ENCODE measurements at regions of chr10 and their contacts with region 1.

Region 1: DNA sequence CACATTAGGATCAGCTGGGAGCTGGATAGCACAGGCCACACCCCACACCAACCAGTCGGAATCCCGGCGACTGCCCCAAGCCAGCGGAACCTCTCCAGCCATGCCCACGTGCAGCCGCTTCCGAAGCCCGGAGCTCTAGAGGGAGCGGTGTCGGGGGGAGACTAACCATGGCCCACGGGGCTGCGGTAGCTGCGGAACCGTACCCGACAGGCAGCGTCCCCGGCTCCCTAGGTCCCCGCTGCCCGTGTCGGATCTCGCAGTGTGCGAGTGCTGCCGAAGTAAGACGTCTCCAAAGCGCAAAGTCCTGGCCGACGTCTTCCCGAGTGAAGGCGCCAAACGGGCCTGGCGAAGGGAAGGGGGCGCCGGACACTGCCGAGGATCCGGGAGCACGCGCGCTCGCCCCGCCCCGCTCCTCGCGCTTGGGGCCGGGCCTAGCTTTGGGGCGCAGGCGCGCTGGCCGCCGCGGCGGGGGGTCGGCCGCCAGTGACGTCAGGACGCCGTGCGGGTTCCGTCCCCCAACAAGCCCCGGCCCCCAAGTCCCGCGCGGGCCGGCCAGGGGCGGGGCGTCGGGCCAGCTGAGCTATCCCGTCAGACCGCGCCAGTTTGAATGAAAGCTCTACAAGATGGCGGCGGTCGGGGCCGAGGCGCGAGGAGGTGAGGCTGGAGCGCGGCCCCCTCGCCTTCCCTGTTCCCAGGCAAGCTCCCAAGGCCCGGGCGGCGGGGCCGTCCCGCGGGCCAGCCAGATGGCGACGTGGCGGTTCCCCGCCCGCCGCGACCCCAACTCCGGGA is at the start of gene SUV39H2:
- DNase-seq: peak; percentile 96 to 98 (median 97)
- ATAC-seq: peak; percentile 89 to 98 (median 95)
- H3K4me3 ChIP-seq: peak within 1 kb of the TSS; percentile 74 to 97 (median 90)
- H3K27ac ChIP-seq: peak within 1 kb of the TSS; percentile 82 to 99 (median 97)
- H3K4me1 ChIP-seq: peaks cover 0 to 36% (median 22%) of the 10 kb centered on the region in 12 donors
- H3K27me3 ChIP-seq: no peaks in the 10 kb centered on the region
- CTCF ChIP-seq: peak in 5 of 12 donors; percentile 13 to 37 (median 29)
- POLR2A ChIP-seq: peak in 1 of 2 donors; percentile 72
- total RNA-seq, gene SUV39H2: 1.3 to 8.4 (median 5.5) TPM

Region 2: DNA sequence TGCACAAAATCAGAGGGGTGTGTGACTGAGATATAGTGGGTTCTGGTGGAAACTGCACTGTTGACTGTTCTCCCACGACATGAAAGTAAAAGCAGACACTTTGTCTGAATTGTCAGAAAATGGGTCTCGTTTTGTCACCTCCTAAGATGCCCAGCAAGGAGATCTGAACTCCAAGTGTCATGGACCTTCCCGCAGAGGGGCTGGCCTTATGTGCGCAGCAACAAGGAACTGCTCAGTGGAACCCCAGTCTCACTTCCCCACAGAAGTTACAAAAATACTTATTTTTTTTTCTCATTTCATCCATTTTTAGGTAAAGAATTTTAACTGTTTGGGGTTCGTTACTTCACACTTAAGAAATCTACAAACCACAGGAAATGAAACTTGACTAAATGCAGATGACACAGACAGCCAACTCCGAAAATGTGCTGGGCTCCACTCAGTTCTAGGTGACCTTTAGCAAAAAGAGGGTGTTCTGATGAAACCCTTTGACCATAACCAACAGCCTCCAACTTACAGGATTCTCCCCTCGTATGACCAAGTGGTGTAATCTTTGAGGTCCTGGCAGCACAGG is 218.7 kb before region 1 on chr10:
- intact Hi-C with region 1: no loop called
- DNase-seq: peak in 2 of 5 donors; percentile 12 to 60
- ATAC-seq: peak in 3 of 4 donors; percentile 39 to 72 (median 51)
- H3K4me3 ChIP-seq: no peak overlapping the region
- H3K27ac ChIP-seq: peak overlapping the region in 1 of 12 donors; percentile 60
- H3K4me1 ChIP-seq: peaks cover 0 to 56% (median 0%) of the 10 kb centered on the region in 12 donors
- H3K27me3 ChIP-seq: no peaks in the 10 kb centered on the region
- CTCF ChIP-seq: no peak
- POLR2A ChIP-seq: no peak

Region 3: DNA sequence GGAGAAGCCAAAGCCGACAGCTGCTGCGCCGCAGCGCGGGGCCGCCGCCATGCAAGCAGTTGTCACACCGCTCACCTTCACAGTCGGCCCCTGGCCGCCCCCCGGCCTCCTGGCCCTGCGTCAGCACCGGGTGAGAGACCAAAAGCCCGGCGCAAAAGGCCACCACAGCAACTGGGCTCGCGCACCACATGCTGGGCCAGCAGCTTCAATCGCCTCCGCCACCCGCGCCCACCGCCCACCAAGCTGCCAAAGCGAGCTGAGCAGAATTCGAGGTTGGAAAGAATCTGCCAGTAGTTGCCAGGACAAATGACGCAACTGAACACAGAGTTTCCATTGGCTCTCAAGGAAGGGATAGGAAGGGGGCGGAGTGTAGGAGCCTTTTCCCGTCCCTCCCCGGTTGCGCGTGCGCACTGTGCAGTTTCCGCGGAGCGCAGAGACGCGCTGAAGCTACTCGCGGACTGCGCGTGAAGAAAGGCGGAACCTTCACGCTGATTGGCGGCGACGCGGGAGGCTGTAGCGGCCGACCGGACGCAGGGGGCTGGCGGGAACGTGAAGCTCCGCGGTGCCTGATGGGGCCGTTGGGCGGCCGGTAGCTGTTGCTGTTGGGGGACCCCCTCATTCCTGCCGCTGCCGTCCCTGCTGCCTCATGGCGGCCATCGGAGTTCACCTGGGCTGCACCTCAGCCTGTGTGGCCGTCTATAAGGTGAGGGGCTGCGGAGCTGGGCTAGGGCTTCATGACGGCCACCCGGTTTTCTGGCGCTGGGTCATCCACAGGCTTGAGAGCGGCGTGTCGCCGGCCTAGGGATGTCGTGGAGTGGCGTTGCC is 40.5 kb before region 1 on chr10 and contains the starts of genes CDNF, HSPA14 and MSANTD7:
- intact Hi-C with region 1: loop called in 8 of 10 experiments (anchors 1 to 5 kb)
- DNase-seq: peak; percentile 99 to 100 (median 100)
- ATAC-seq: peak; percentile 99
- H3K4me3 ChIP-seq: peak within 1 kb of the TSS; percentile 73 to 99 (median 94)
- H3K27ac ChIP-seq: peak within 1 kb of the TSS; percentile 94 to 99 (median 97)
- H3K4me1 ChIP-seq: peaks cover 5 to 26% (median 17%) of the 10 kb centered on the region in 12 donors
- H3K27me3 ChIP-seq: no peaks in the 10 kb centered on the region
- CTCF ChIP-seq: peak in 1 of 12 donors; percentile 12
- POLR2A ChIP-seq: peak; percentile 28 to 87
- total RNA-seq, gene CDNF: 1.7 to 5.4 (median 4.1) TPM
- total RNA-seq, gene HSPA14: 6.2 to 11.1 (median 8.3) TPM
- total RNA-seq, gene MSANTD7: 4.5 to 8.1 (median 5.6) TPM

Region 4: DNA sequence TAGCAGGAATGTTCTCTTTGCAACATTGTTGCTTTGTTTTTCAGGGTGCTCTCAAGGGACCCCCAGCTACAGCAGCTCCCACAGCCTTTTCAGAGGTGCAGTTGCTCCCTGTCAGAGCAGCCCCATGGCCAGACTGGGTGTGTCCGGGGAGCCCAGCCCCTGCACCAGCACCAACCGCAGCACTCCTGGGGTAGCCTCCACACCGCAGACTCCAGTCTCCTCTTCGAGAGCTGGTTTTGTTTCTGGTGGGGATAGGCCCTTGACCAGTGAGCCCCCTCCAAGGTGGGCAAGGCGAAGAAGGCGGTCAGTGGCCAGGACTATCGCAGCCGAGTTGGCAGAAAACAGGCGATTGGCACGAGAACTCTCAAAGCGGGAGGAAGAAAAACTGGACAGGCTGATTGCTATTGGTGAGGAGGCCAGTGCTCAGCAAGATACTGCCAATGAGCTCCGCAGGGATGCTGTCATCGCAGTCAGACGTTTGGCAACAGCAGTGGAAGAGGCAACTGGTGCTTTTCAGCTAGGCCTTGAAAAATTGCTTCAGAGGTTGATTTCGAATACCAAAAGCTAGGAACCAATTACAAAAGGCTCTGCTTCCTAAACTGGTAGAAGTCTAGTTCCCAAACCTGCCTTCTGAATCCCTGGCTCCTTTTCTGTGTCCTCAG is 35.0 kb before region 1 on chr10:
- intact Hi-C with region 1: loop called in 8 of 10 experiments (anchors 1 to 5 kb)
- DNase-seq: no peak
- ATAC-seq: no peak
- H3K4me3 ChIP-seq: no peak overlapping the region
- H3K27ac ChIP-seq: no peak overlapping the region
- H3K4me1 ChIP-seq: peaks cover 0 to 14% (median 9%) of the 10 kb centered on the region in 12 donors
- H3K27me3 ChIP-seq: no peaks in the 10 kb centered on the region
- CTCF ChIP-seq: no peak
- POLR2A ChIP-seq: no peak

Region 5: GRCh38 chr10:14954001-14954770 is 75.7 kb after region 1 on chr10 and contains the start of gene DCLRE1C:
- intact Hi-C with region 1: loop called in 5 of 10 experiments (anchors 1 to 5 kb)
- DNase-seq: peak; percentile 90 to 94 (median 92)
- ATAC-seq: peak; percentile 96 to 99 (median 98)
- H3K4me3 ChIP-seq: peak within 1 kb of the TSS; percentile 69 to 95 (median 80)
- H3K27ac ChIP-seq: peak within 1 kb of the TSS; percentile 33 to 91 (median 85)
- H3K4me1 ChIP-seq: peaks cover 0 to 37% (median 18%) of the 10 kb centered on the region in 12 donors
- H3K27me3 ChIP-seq: no peaks in the 10 kb centered on the region
- CTCF ChIP-seq: peak in 1 of 12 donors; percentile 6
- POLR2A ChIP-seq: peak in 1 of 2 donors; percentile 40
- total RNA-seq, gene DCLRE1C: 2.5 to 9.6 (median 5.3) TPM

Region 6: DNA sequence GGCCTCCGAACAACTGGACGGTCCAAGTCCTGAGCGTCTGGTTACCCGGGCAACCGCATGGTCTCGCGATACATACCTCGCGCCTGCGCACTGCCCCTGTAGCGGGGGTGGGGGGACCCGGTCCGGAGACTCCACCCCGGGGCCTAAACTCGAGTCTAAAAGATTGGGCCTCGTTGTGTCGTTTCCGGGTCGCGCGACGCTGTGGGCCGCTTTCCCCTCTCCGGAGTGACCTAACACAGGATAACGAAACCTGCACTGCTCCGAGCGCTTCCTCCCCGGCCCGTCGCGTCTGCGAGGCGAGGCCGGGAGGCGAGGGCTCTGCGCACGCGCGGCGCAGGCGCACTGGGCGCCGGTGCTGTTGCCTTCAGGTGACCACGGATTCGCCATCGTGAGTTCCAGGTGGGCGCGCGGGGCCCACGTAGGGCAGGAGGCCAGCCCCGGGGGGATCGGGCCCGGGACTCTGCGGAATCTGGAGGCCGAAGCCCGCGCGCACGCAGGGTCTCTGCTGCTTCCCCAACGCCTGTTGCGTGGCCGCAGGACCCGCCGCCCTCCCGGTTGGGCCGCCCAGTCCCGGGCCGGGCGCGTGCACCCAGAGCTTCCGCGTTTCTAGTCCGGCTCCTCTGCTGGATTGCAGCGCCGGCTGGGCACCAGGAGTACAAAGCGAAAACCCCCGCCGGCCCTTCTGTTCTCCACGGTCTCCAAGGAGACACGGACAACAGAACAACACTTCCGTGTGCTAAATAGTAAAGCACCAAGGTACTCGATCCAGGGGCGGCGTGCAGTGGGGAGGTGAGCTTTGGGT is 218.8 kb after region 1 on chr10 and contains the start of gene RPP38:
- intact Hi-C with region 1: loop called in 1 of 10 experiments (anchors 10 kb)
- DNase-seq: peak; percentile 95 to 99 (median 97)
- ATAC-seq: peak; percentile 97 to 99 (median 98)
- H3K4me3 ChIP-seq: peak within 1 kb of the TSS; percentile 63 to 97 (median 88)
- H3K27ac ChIP-seq: peak within 1 kb of the TSS; percentile 85 to 100 (median 95)
- H3K4me1 ChIP-seq: peaks cover 2 to 31% (median 19%) of the 10 kb centered on the region in 12 donors
- H3K27me3 ChIP-seq: peaks cover 0 to 3% (median 0%) of the 10 kb centered on the region in 9 donors
- CTCF ChIP-seq: peak in 1 of 12 donors; percentile 3
- POLR2A ChIP-seq: peak in 1 of 2 donors; percentile 78
- total RNA-seq, gene RPP38: 7.2 to 14.4 (median 8.9) TPM

Measured in heart left ventricle (tissue), 16 donors.